ENCODE measurements at regions of chr9 and their contacts with region 1.

Region 1: DNA sequence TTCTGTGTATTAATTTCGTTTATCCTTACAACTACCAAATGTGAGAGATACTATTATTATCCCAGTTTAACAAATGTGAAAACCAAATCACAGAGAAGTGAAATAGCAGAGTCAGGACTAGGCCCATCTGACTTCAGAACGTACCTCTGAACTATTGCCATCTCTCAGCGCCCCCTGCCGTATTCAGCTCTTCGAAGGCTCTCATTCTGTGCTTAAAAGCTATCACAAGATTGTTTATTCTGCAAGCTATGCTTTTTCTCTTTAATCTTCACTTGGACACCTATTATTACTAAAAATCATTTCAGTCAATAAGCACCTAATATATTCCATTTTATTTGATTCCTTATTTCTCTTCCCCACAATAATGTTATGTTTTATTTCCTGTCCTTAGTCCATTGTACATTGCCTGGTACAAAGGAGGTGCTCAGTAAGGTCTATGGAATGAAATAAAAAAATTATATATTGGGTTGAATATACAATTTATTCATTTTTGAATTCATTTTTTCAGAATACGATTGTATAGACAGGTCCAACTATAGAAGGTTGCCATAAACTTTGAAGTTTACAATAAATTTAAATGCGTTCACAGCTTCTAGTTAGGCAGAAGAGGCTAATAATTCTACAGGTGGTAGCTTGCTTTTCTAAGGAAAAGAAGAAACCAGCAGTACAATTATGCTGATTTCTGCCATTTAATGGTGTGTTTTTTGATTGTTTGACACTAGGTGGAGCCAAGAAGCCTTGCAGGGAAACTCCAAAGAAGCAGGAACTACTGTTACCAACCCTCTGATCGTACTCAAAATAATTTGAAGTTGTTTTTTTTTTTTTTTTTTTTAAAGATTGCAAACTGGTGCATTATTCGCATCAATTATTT is 202.2 kb upstream of the DMRTA1 start:
- DNase-seq: peak; percentile 48
- H3K4me3 Mint-ChIP-seq: no peak overlapping the region
- H3K27ac Mint-ChIP-seq: no peak overlapping the region
- H3K4me1 Mint-ChIP-seq: peaks cover 20% of the 10 kb centered on the region
- H3K27me3 Mint-ChIP-seq: peaks cover 16% of the 10 kb centered on the region

Region 2: GRCh38 chr9:21965401-21965951 is 278.9 kb before region 1 on chr9:
- CTCF ChIA-PET with region 1: no interaction called
- POLR2A ChIA-PET with region 1: no interaction called
- intact Hi-C with region 1: loop called (anchors 5 kb)
- DNase-seq: peak; percentile 71
- H3K4me3 Mint-ChIP-seq: peak overlapping the region; percentile 54
- H3K27ac Mint-ChIP-seq: no peak overlapping the region
- H3K4me1 Mint-ChIP-seq: peaks cover 22% of the 10 kb centered on the region
- H3K27me3 Mint-ChIP-seq: peaks cover 84% of the 10 kb centered on the region

Region 3: GRCh38 chr9:22030101-22030598 is 214.2 kb before region 1 on chr9:
- CTCF ChIA-PET with region 1: interaction called, 3 read pairs
- POLR2A ChIA-PET with region 1: no interaction called
- intact Hi-C with region 1: loop called (anchors 5 kb)
- DNase-seq: no peak
- H3K4me3 Mint-ChIP-seq: no peak overlapping the region
- H3K27ac Mint-ChIP-seq: no peak overlapping the region
- H3K4me1 Mint-ChIP-seq: no peaks in the 10 kb centered on the region
- H3K27me3 Mint-ChIP-seq: peaks cover 9% of the 10 kb centered on the region

Region 4: GRCh38 chr9:22119537-22120158 is 124.7 kb before region 1 on chr9:
- CTCF ChIA-PET with region 1: interaction called, 14 read pairs
- POLR2A ChIA-PET with region 1: no interaction called
- intact Hi-C with region 1: no loop called
- DNase-seq: peak; percentile 15
- H3K4me3 Mint-ChIP-seq: no peak overlapping the region
- H3K27ac Mint-ChIP-seq: no peak overlapping the region
- H3K4me1 Mint-ChIP-seq: no peaks in the 10 kb centered on the region
- H3K27me3 Mint-ChIP-seq: peaks cover 21% of the 10 kb centered on the region

Region 5: GRCh38 chr9:22452415-22453010 is 208.1 kb after region 1 on chr9:
- CTCF ChIA-PET with region 1: interaction called, 58 read pairs
- POLR2A ChIA-PET with region 1: no interaction called
- intact Hi-C with region 1: loop called (anchors 1 kb)
- DNase-seq: peak; percentile 60
- H3K4me3 Mint-ChIP-seq: no peak overlapping the region
- H3K27ac Mint-ChIP-seq: no peak overlapping the region
- H3K4me1 Mint-ChIP-seq: peaks cover 6% of the 10 kb centered on the region
- H3K27me3 Mint-ChIP-seq: peaks cover 26% of the 10 kb centered on the region